AG04449 (cell line): ENCODE measurements at regions of chr15 and their contacts with region 1.

Region 1: GRCh38 chr15:51239748-51240465 is 98.5 kb downstream of the CYP19A1 start:
- DNase-seq: no peak
- H3K4me3 ChIP-seq: no peak overlapping the region
- CTCF ChIP-seq: no peak

Region 2: GRCh38 chr15:51227940-51228783 is 11.7 kb before region 1 on chr15:
- CTCF ChIA-PET with region 1: interaction called, 21 read pairs
- POLR2A ChIA-PET with region 1: no interaction called
- DNase-seq: peak; percentile 52
- H3K4me3 ChIP-seq: no peak overlapping the region
- CTCF ChIP-seq: no peak